ENCODE measurements at regions of chr6 and their contacts with region 1.

Region 1: GRCh38 chr6:127918506-127919427 is 17.9 kb upstream of the THEMIS start:
- DNase-seq: peak; percentile 14
- ATAC-seq: peak; percentile 81
- H3K4me3 Mint-ChIP-seq: peak overlapping the region; percentile 73
- H3K27ac Mint-ChIP-seq: peak overlapping the region; percentile 88
- H3K4me1 Mint-ChIP-seq: peaks cover 82% of the 10 kb centered on the region
- H3K27me3 Mint-ChIP-seq: no peaks in the 10 kb centered on the region
- CTCF ChIP-seq: no peak

Region 2: DNA sequence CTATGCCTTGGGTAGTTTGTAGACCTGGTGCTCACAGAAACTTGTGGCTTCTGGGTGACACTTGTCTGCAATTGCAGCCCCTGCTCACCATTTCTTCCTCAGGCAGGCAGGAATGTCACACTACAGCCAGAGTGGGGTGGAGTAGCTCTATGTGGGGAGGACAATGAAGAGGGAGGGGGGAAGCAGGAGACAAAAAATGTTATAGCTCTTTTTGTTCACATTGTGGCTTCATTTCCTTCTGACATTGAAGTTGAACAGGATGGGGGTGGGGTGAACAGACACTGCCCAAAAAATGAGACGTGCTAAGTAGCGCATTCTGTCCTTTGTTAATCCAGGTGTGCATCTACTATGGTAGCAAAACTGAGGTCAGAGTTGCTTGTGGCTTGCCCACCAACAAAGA is 17.8 kb before region 1 on chr6 and contains the start of gene THEMIS:
- CTCF ChIA-PET with region 1: interaction called, 13 read pairs
- POLR2A ChIA-PET with region 1: interaction called, 5 read pairs
- intact Hi-C with region 1: no loop called
- DNase-seq: peak; percentile 78
- ATAC-seq: peak; percentile 72
- H3K4me3 Mint-ChIP-seq: peak within 1 kb of the TSS; percentile 99
- H3K27ac Mint-ChIP-seq: peak within 1 kb of the TSS; percentile 100
- H3K4me1 Mint-ChIP-seq: peaks cover 44% of the 10 kb centered on the region
- H3K27me3 Mint-ChIP-seq: no peaks in the 10 kb centered on the region
- CTCF ChIP-seq: no peak
- total RNA-seq, gene THEMIS: 79.5 to 80.1 TPM

Region 3: GRCh38 chr6:127907960-127908640 is 10.7 kb before region 1 on chr6:
- CTCF ChIA-PET with region 1: interaction called, 11 read pairs
- POLR2A ChIA-PET with region 1: interaction called, 10 read pairs
- intact Hi-C with region 1: no loop called
- DNase-seq: peak; percentile 60
- ATAC-seq: peak; percentile 72
- H3K4me3 Mint-ChIP-seq: peak overlapping the region; percentile 70
- H3K27ac Mint-ChIP-seq: peak overlapping the region; percentile 88
- H3K4me1 Mint-ChIP-seq: peaks cover 71% of the 10 kb centered on the region
- H3K27me3 Mint-ChIP-seq: no peaks in the 10 kb centered on the region
- CTCF ChIP-seq: no peak

Measured in activated CD8-positive, alpha-beta T cell treated with anti-CD3 and anti-CD28 coated beads for 36 hours (primary cell).